ENCODE measurements at regions of chr13 and their contacts with region 1.

Region 1: GRCh38 chr13:106536244-106537034 is 977 bp upstream of the EFNB2 start:
- DNase-seq: peak; percentile 85 to 88
- H3K4me3 ChIP-seq: peak overlapping the region; percentile 63 to 86
- H3K27ac ChIP-seq: peak overlapping the region; percentile 33 to 80
- H3K4me1 ChIP-seq: peaks cover 0 to 19% (median 13%) of the 10 kb centered on the region in 4 donors
- H3K27me3 ChIP-seq: no peaks in the 10 kb centered on the region
- CTCF ChIP-seq: peak; percentile 89 to 96

Region 2: DNA sequence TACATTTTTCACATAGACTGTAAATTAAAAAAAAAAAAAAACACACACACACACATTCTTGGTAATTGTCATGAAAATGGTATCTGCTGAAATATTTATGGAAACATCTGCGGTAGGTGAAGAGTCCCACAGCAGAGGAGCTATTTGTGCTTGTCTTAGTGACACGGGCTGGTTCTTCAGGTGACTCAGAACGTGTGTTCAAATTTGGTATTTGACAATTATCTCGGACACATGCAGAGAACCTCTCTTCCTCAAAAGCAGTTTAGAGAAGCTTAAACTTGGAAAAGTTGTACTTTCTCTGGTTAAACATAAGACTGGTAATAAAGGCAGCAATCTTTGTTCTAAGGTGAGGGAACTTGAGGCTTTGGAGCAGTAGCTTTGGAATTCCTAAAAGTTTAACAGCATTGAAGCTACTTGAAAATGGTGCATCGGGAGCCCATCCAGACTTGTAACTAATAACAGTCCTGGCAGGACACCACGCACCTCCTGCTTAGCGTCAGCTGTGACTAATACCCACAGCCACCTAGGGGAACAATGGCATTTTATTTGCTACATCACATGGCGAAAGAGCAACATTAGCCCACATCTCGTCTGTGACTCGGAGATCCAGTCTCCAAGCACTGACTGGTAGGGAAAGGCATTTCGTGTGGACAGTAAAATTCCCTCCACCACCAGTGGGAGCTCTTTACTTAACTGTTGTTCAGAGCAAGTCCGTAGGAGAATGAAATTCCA is 1965.1 kb before region 1 on chr13:
- intact Hi-C with region 1: loop called (anchors 10 kb)
- DNase-seq: peak; percentile 62 to 69
- H3K4me3 ChIP-seq: no peak overlapping the region
- H3K27ac ChIP-seq: no peak overlapping the region
- H3K4me1 ChIP-seq: peaks cover 0 to 8% (median 0%) of the 10 kb centered on the region in 4 donors
- H3K27me3 ChIP-seq: no peaks in the 10 kb centered on the region
- CTCF ChIP-seq: peak; percentile 51 to 55

Region 3: DNA sequence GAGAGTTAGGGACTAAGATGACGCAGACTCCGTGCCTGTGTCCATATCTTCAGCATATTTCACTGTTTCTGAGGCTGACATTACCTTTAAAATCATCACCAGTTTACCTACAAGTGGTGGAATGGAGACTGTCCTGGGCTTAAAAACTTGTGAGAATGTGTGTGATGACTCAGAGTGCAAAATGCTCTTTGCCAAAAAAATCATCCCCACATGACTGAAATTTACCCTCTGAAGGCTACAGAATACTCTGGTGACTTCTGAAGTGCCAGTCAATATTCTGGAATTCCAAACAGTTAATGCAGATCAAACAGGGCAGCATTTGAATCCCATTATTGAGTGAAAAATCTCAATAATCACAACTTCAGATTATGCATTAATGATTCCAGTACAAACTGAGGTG is 902.4 kb before region 1 on chr13:
- intact Hi-C with region 1: loop called (anchors 5 kb)
- DNase-seq: no peak
- H3K4me3 ChIP-seq: no peak overlapping the region
- H3K27ac ChIP-seq: no peak overlapping the region
- H3K4me1 ChIP-seq: no peaks in the 10 kb centered on the region
- H3K27me3 ChIP-seq: no peaks in the 10 kb centered on the region
- CTCF ChIP-seq: no peak

Region 4: GRCh38 chr13:107124129-107124718 is 587.8 kb after region 1 on chr13:
- intact Hi-C with region 1: loop called (anchors 10 kb)
- DNase-seq: no peak
- H3K4me3 ChIP-seq: no peak overlapping the region
- H3K27ac ChIP-seq: no peak overlapping the region
- H3K4me1 ChIP-seq: no peaks in the 10 kb centered on the region
- H3K27me3 ChIP-seq: no peaks in the 10 kb centered on the region
- CTCF ChIP-seq: peak; percentile 65 to 78